ENCODE measurements at regions of chr3 and their contacts with region 1.

Region 1: DNA sequence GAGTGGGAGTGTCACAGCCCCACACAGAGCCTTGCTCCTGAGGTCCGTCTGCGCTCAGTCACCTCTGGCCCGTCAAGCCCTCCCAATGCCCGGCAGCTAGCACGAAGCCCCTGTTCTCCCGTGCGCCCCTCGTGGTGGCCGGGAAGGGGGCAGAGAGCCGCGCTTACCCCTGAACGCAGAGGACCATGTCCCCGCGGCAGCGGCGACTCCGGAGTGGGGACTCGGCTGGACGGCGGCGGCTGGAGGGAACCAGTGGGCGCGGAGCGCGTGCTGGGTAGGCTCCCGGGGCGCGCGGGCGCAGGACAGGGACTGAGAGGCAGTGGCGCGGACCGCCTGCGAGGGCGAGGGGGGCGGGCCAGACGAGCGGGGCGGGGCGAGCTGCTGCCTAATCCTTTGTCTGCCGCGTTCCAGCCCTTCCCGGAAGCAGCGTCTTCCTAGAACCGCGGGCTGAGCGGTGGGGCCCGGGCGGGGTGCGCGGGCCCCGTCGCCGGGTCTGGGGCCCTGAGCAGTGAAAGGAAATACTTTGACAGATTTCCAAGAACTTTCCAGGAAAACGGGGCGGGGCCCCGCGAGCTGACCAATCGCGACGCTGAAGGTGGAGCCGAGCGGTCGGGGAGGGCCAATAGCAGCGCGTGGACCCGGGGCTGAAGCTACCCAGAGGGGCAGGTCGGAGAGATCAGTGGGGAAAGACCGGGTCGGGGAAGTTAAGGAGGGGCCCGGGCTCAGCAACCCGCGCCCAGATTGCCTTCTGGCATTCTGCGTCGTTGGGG is at the start of gene CISH:
- H3K4me3 ChIP-seq: peak within 1 kb of the TSS; percentile 46
- H3K27ac ChIP-seq: peak within 1 kb of the TSS; percentile 67; the same call in 1 of the 2 replicates
- H3K4me1 ChIP-seq: 0 out of 2 replicates have a peak, but pooled peaks cover 2% of the 10 kb centered on the region
- CTCF ChIP-seq: peak; percentile 74

Region 2: DNA sequence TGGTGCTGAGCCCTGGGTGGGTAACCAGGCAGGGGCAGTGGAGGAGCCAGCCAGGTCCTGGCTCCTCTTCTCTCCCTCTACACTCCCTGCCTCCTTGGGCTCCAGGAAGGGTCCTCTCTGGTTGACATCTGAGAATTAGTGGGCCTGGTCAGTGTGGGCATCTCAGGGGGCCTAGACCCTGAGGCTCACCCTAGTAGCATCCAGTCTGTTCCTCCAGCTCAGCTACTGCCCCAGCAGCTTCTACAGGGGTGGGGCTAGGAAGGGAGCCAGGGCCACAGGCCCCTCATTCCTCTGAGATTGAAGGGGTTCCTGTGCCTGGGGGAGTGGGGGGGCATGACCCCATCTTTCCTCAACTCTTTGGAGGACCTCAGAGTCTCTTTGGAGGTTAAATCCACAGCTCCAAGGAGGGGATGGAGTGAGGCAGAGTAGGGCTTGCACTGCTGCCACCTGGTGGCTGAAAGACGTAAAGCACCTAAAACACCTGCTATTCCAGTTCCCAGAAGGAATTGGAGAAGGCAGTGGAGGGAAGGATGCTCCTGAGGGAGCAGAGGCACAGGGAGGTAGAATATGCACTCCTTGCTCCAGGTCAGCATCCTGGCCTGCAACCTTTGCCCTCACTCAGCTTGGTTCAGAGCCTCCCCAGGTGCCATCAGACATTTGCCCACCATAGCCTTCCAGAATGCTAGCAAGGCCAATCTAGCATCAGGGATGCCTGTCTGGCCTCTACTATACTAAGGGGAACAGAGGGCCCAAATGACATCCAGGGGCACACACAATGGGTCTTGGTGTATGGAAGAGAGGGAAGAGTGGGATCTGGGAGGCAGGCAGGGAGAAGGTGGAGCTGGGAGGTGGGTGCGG is 69.2 kb before region 1 on chr3:
- CTCF ChIA-PET with region 1: interaction called, 17 read pairs
- POLR2A ChIA-PET with region 1: no interaction called
- H3K4me3 ChIP-seq: no peak overlapping the region
- H3K27ac ChIP-seq: no peak overlapping the region
- H3K4me1 ChIP-seq: no peaks in the 10 kb centered on the region
- CTCF ChIP-seq: peak; percentile 70

Region 3: DNA sequence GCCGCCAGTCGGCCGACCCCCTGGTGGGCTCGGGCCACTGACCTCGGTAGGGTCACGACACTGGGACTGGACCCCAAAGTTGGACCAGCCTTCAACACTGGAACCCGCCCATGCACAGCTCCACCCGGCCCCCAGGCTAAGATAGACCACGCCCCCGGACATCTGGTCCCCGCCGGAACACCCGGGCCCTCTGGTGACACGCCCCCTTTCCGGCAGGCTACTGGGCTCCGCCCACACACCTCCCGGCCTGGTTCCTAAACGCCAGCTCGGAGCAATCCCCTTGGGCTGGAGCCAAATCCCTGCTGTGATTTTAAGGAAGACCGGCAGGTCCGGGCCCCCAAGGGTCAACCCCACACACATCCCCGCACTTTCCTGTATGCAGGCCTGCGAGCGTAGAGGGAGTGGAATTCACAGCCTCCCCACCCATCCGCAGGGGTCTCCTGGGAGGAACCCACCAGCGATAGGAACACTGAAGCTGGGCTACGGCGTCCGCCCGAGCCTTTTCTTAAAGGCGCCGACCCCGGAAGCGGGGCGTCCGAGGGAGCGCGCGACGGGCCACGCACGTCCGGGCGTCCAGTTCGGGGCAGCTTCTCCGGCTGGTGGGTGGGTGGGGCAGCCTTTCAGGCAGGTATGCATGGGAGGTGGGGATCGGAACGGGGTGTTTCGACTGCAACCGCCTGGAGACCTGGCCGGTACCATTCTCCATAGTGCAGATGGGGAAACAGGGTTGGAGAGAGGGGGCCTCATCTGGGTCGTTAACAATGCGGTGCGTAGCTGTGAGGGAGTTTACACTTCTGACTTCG is 42.5 kb before region 1 on chr3 and contains the start of gene HEMK1:
- CTCF ChIA-PET with region 1: interaction called, 139 read pairs
- POLR2A ChIA-PET with region 1: interaction called, 25 read pairs
- H3K4me3 ChIP-seq: peak within 1 kb of the TSS; percentile 53
- H3K27ac ChIP-seq: peak within 1 kb of the TSS; percentile 44; the same call in 1 of the 2 replicates
- H3K4me1 ChIP-seq: no peaks in the 10 kb centered on the region; the same call in 1 of the 2 replicates
- CTCF ChIP-seq: no peak

Region 4: GRCh38 chr3:50652709-50653108 is 41.1 kb after region 1 on chr3:
- CTCF ChIA-PET with region 1: interaction called, 61 read pairs
- POLR2A ChIA-PET with region 1: interaction called, 4 read pairs
- H3K4me3 ChIP-seq: no peak overlapping the region
- H3K27ac ChIP-seq: no peak overlapping the region
- H3K4me1 ChIP-seq: no peaks in the 10 kb centered on the region
- CTCF ChIP-seq: peak; percentile 42; the same call in 1 of the 2 replicates

Region 5: GRCh38 chr3:50815867-50816266 is 204.2 kb after region 1 on chr3:
- CTCF ChIA-PET with region 1: no interaction called
- POLR2A ChIA-PET with region 1: no interaction called
- H3K4me3 ChIP-seq: no peak overlapping the region
- H3K27ac ChIP-seq: no peak overlapping the region
- H3K4me1 ChIP-seq: peaks cover 3% of the 10 kb centered on the region; the same call in 1 of the 2 replicates
- CTCF ChIP-seq: no peak

Region 6: DNA sequence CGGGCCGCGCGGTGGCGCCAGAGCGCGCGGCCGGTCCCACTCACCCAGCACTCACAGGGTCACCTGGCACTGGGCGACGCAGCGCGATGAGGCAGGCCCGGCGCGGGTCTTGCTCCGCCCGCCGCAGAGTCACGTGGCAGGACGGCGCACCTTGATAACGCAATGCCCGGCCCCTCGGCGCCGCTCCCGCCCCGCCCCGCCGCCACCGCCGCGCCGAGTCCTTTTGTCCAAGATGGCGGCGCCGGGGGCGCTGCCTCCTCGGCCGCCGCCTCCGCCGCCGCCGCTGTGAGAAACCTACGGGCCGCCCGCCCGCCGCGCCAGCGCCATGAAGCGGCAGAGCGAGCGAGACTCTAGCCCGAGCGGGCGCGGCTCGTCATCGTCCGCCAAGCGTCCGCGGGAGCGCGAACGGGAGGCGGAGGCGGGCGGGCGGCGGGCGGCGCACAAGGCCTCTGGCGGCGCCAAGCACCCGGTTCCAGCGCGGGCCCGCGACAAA is 779.5 kb after region 1 on chr3 and contains the start of gene RBM15B:
- CTCF ChIA-PET with region 1: interaction called, 27 read pairs
- POLR2A ChIA-PET with region 1: interaction called, 5 read pairs
- H3K4me3 ChIP-seq: peak within 1 kb of the TSS; percentile 82
- H3K27ac ChIP-seq: peak within 1 kb of the TSS; percentile 87
- H3K4me1 ChIP-seq: no peaks in the 10 kb centered on the region; the same call in 1 of the 2 replicates
- CTCF ChIP-seq: peak; percentile 90

Measured in HEK293 (cell line).